Mammary epithelial cell (primary cell): ENCODE measurements at regions of chr7 and their contacts with region 1.

Region 1: GRCh38 chr7:97872025-97872669 is at the start of gene ASNS:
- DNase-seq: peak; percentile 93
- H3K4me3 ChIP-seq: peak within 1 kb of the TSS; percentile 81 to 90 (median 81)
- H3K27ac ChIP-seq: peak within 1 kb of the TSS; percentile 48
- H3K4me1 ChIP-seq: peaks cover 7% of the 10 kb centered on the region
- H3K27me3 ChIP-seq: no peaks in the 10 kb centered on the region
- CTCF ChIP-seq: no peak
- total RNA-seq, gene ASNS: 175 to 188 TPM

Region 2: DNA sequence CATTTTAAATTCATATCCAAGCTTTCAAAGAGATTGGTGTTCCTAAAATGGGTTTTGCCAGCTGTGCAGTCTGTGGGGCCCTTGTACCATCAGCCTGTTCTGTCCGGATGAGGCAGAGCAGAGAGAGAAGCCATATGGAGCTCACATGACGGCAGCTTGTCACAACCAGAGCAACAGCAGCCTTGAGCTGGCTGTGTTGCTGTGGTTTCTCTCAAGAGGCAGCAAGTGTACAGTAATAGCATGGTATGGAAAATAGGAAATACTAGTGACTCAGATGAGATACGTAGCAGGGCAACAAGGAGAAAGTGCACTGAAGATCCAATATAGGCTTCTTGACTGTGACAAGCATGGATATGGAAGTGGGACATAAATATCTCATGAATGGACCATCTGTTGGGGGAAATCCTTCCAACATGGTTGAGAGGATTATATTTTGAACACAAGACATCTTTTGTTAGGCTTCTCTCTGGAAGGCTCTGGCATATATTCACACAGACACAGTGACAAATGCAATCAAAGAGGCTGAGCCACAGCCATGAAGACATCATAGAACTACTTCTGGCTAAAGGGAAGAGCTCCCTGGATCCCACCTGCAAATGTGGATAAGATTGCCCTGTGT is 391.3 kb before region 1 on chr7:
- CTCF ChIA-PET with region 1: no interaction called
- dilution Hi-C with region 1: no loop called
- in situ Hi-C with region 1: no loop called
- intact Hi-C with region 1: no loop called
- DNase-seq: no peak
- H3K4me3 ChIP-seq: no peak overlapping the region
- H3K27ac ChIP-seq: no peak overlapping the region
- H3K4me1 ChIP-seq: no peaks in the 10 kb centered on the region
- H3K27me3 ChIP-seq: no peaks in the 10 kb centered on the region
- CTCF ChIP-seq: no peak

Region 3: GRCh38 chr7:97959046-97959445 is 86.9 kb after region 1 on chr7:
- CTCF ChIA-PET with region 1: no interaction called
- dilution Hi-C with region 1: no loop called
- in situ Hi-C with region 1: no loop called
- intact Hi-C with region 1: no loop called
- DNase-seq: no peak
- H3K4me3 ChIP-seq: no peak overlapping the region
- H3K27ac ChIP-seq: no peak overlapping the region
- H3K4me1 ChIP-seq: no peaks in the 10 kb centered on the region
- H3K27me3 ChIP-seq: no peaks in the 10 kb centered on the region
- CTCF ChIP-seq: no peak

Region 4: DNA sequence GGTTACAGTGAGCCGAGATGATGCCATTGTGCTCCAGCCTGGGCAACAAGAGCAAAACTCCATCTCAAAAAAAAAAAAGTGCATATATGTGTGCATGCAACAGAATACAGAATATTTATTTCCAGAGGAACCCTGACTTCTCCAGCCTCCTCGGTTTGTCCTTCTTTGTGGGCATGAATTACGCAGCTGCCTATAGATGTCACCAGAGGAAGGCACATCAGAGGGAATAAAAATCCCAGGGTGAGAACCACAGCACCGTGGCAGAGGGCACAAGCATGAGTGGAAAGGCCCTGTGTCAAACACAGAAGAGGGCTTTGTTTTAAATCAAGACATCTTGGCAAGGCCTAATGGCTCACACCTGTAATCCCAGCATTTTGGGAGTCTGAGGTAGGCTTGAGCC is 142.2 kb after region 1 on chr7:
- CTCF ChIA-PET with region 1: interaction called, 14 read pairs
- dilution Hi-C with region 1: no loop called
- in situ Hi-C with region 1: no loop called
- intact Hi-C with region 1: loop called (anchors 1 kb)
- DNase-seq: no peak
- H3K4me3 ChIP-seq: no peak overlapping the region
- H3K27ac ChIP-seq: no peak overlapping the region
- H3K4me1 ChIP-seq: no peaks in the 10 kb centered on the region
- H3K27me3 ChIP-seq: no peaks in the 10 kb centered on the region
- CTCF ChIP-seq: peak in 1 of 2 donors; percentile 2

Region 5: GRCh38 chr7:98168181-98168905 is 296.2 kb after region 1 on chr7:
- CTCF ChIA-PET with region 1: no interaction called
- dilution Hi-C with region 1: no loop called
- in situ Hi-C with region 1: no loop called
- intact Hi-C with region 1: loop called (anchors 5 kb)
- DNase-seq: peak; percentile 64
- H3K4me3 ChIP-seq: no peak overlapping the region
- H3K27ac ChIP-seq: no peak overlapping the region
- H3K4me1 ChIP-seq: peaks cover 19% of the 10 kb centered on the region
- H3K27me3 ChIP-seq: no peaks in the 10 kb centered on the region
- CTCF ChIP-seq: peak; percentile 63 to 84